Right lobe of liver (tissue), 6 donors: ENCODE measurements at regions of chr2 and their contacts with region 1.

Region 1: GRCh38 chr2:197399887-197400540 is 34.8 kb downstream of the SF3B1 start:
- DNase-seq: no peak
- ATAC-seq: no peak
- H3K4me3 ChIP-seq: no peak overlapping the region
- H3K27ac ChIP-seq: no peak overlapping the region
- H3K4me1 ChIP-seq: no peaks in the 10 kb centered on the region
- H3K27me3 ChIP-seq: no peaks in the 10 kb centered on the region
- CTCF ChIP-seq: no peak
- POLR2A ChIP-seq: no peak

Region 2: GRCh38 chr2:197052356-197052755 is 347.7 kb before region 1 on chr2:
- intact Hi-C with region 1: no loop called
- DNase-seq: no peak
- ATAC-seq: no peak
- H3K4me3 ChIP-seq: no peak overlapping the region
- H3K27ac ChIP-seq: no peak overlapping the region
- H3K4me1 ChIP-seq: no peaks in the 10 kb centered on the region
- H3K27me3 ChIP-seq: no peaks in the 10 kb centered on the region
- CTCF ChIP-seq: no peak
- POLR2A ChIP-seq: no peak

Region 3: DNA sequence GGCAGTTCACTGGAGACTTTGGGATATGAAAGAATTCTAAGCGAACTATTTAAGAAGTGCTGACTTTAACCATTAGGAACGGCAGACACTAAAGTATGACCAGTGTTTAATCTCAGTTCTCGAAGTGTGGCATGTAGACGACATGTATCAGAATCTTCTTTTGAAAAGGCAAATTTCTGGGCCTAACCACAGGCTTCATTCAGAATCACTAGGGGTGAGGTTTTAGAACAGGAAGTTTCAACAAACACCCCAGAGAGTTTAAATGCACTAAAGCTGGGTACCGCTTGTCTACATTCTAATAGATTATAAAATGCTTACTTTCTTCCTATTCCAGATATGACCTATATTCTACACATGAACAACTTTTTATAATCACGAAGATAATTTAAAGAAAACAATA is 269.7 kb before region 1 on chr2:
- intact Hi-C with region 1: no loop called
- DNase-seq: no peak
- ATAC-seq: no peak
- H3K4me3 ChIP-seq: no peak overlapping the region
- H3K27ac ChIP-seq: no peak overlapping the region
- H3K4me1 ChIP-seq: no peaks in the 10 kb centered on the region
- H3K27me3 ChIP-seq: no peaks in the 10 kb centered on the region
- CTCF ChIP-seq: no peak
- POLR2A ChIP-seq: no peak

Region 4: GRCh38 chr2:197461057-197461456 is 61.0 kb after region 1 on chr2:
- intact Hi-C with region 1: no loop called
- DNase-seq: no peak
- ATAC-seq: no peak
- H3K4me3 ChIP-seq: no peak overlapping the region
- H3K27ac ChIP-seq: no peak overlapping the region
- H3K4me1 ChIP-seq: peaks cover 0 to 22% (median 0%) of the 10 kb centered on the region in 4 donors
- H3K27me3 ChIP-seq: no peaks in the 10 kb centered on the region
- CTCF ChIP-seq: no peak
- POLR2A ChIP-seq: no peak

Region 5: DNA sequence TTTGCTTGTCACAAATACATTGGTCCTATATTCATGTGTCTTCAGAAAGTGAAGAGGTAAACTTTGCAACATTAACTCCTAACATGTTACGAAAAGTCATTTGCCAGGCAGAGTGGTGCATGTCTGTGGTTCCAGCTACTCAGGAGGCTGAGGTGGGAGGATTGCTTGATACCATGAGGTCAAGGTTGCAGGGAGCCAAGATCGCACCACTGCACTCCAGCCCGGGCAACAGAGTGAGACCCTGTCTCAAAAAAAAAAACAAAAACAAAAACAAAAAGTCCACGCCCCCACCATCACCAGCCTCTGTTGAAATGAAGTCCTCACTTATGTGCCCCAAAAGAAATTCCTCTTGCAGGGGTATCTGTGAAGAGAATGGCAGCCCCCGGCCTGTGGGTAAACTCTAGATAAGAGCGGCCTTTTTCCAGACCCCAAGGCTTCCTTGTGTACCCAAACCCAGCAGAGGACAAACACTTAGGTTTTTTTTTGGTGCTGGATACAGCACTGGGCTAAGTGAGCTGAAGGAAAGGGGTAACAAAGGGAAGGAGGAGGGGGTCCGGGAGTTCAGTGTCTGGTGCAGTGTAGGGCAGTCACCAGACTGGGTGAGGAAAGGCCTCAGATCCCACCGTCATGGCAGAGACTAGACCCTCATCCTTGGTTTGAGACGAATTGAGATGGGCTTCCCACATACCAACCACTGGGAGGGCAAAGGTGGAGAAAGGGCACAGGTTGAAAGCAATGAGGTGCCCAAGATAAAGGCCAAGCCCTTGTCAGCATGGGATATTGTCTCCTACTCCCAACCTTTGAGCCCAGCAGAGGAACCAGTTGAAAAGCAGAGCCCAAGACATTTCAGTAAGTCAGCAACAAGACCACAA is 80.4 kb after region 1 on chr2:
- intact Hi-C with region 1: loop called (anchors 10 kb)
- DNase-seq: no peak
- ATAC-seq: peak in 2 of 4 donors; percentile 15 to 18
- H3K4me3 ChIP-seq: no peak overlapping the region
- H3K27ac ChIP-seq: peak overlapping the region in 1 of 3 donors; percentile 3
- H3K4me1 ChIP-seq: peaks cover 0 to 11% (median 0%) of the 10 kb centered on the region in 4 donors
- H3K27me3 ChIP-seq: no peaks in the 10 kb centered on the region
- CTCF ChIP-seq: no peak
- POLR2A ChIP-seq: no peak